OCI-LY7 (cell line): ENCODE measurements at regions of chr7 and their contacts with region 1.

Region 1: DNA sequence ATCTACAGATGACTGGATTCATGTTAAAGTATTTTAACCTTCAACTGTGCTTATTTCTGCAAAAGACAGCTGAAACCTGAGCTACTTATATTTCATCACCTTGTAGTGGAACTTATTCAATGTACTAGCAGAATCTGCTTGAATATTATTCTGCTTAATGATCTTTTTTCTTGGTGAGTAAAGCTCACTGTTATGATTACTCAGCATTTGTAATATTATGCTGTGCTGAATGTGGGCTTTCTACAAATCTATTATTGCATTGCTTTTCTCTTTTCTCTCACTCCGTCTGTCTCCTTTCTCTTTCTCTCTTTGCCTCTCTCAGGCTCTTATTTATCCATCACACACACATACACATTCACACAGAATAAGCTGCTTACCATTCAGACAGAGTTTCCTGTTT is 98.7 kb upstream of the TMEM196 start:
- DNase-seq: no peak
- H3K4me3 ChIP-seq: no peak overlapping the region
- H3K27ac ChIP-seq: no peak overlapping the region
- H3K4me1 ChIP-seq: no peaks in the 10 kb centered on the region
- CTCF ChIP-seq: no peak

Region 2: DNA sequence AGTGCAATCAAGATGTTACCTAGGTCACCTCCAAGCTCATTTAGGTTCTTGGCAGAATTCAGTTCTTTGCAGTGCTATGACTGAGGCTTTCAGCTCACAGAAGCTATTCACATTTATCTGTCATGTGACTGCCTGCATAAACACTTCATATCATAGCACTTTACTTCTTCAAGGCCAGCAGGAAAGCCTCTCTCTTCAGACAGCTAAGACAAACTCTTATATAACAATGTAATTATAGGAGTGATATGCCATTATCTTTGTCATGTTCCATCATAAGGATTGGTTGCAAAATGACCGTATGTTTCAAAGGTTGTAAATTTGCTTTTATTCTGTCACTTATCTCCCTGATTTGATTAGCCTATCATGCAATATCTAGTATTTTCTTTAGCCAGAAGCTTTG is 19.9 kb before region 1 on chr7:
- CTCF ChIA-PET with region 1: no interaction called
- POLR2A ChIA-PET with region 1: no interaction called
- intact Hi-C with region 1: no loop called
- DNase-seq: no peak
- H3K4me3 ChIP-seq: no peak overlapping the region
- H3K27ac ChIP-seq: no peak overlapping the region
- H3K4me1 ChIP-seq: no peaks in the 10 kb centered on the region
- CTCF ChIP-seq: no peak

Region 3: GRCh38 chr7:19899529-19899928 is 27.4 kb after region 1 on chr7:
- CTCF ChIA-PET with region 1: no interaction called
- POLR2A ChIA-PET with region 1: no interaction called
- intact Hi-C with region 1: loop called (anchors 2 kb)
- DNase-seq: no peak
- H3K4me3 ChIP-seq: no peak overlapping the region
- H3K27ac ChIP-seq: no peak overlapping the region
- H3K4me1 ChIP-seq: no peaks in the 10 kb centered on the region
- CTCF ChIP-seq: no peak